Right cardiac atrium (tissue), 5 donors: ENCODE measurements at regions of chr1 and their contacts with region 1.

Region 1: DNA sequence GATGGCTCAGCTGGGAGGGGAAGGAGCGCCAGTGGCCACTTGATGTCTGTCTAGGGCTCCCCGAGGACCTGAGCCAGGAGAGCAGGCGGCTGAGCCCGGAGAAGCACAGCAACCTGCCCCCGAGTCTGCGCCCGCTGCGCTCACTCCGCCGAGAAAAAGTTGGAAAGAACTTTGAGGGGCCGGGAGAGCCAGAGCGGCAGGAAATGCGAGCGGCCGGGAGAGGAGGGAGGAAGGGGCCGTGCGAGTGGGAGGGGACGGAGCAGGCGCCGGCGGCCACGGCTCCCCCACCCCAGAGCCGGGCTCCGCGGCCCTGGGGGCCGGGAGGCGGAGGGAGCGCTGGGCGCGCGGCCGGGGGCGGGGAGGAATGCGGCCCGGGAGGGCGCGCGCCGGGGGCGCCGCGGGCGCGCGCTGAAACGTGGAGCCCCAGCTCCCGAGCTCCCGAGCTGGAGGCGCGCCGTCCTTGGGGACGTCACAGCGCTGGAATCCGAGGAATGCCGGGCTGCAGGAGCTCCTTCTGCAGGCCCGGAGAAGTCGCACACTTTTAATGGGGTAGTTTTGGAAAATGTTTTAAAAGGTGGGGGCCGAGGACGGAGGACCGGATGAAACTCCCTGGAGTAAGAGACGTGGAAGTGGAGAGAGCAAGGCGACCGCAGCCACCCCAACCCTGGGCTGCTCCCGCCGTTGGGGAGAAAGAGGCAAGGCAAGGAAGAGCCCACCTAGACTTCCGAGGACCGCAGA is at the start of gene PTPN14:
- DNase-seq: peak; percentile 90 to 96 (median 95)
- ATAC-seq: peak; percentile 92 to 95
- H3K4me3 ChIP-seq: peak within 1 kb of the TSS; percentile 89
- H3K27ac ChIP-seq: peak within 1 kb of the TSS; percentile 98
- H3K4me1 ChIP-seq: peaks cover 8% of the 10 kb centered on the region
- H3K27me3 ChIP-seq: no peaks in the 10 kb centered on the region
- total RNA-seq, gene PTPN14: 15.7 to 35.1 (median 18.9) TPM

Region 2: GRCh38 chr1:214404154-214404553 is 147.5 kb before region 1 on chr1:
- intact Hi-C with region 1: loop called in 1 of 4 experiments (anchors 10 kb)
- DNase-seq: no peak
- ATAC-seq: no peak
- H3K4me3 ChIP-seq: no peak overlapping the region
- H3K27ac ChIP-seq: no peak overlapping the region
- H3K4me1 ChIP-seq: peaks cover 2% of the 10 kb centered on the region
- H3K27me3 ChIP-seq: no peaks in the 10 kb centered on the region